ENCODE measurements at regions of chr14 and their contacts with region 1.

Region 1: DNA sequence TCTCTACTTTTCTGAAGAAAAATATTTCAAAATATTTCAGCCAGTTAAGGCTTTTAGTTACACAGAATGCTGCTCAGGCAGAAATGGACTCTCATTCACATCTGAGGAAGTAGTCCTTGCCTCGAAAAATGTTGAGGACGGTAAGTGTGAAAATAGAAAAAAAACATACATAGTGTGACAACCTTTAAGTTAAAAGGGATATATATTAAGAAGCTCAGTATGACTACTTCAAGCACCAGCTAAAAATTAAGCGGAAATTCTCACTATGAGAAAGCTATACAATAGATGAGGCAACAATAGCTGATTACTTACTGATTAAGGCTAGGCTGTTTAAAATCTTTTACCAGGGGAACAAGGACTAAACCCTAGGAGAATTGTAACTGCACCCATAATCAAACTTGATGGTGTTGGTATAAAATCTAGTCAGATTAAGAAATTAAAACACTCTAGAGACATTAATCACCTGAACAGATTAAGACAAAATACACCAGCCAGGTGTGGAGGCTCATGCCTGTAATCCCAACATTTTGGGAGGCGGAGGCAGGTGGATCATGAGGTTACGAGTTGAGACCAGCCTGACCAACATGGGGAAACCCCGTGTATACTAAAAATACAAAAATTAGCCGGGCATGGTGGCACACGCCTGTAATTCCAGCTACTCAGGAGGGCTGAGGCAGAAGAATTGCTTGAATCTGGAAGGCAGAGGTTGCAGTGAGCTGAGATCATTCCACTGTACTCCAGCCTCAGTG is 53.9 kb downstream of the HNRNPC start:
- DNase-seq: no peak
- H3K4me3 Mint-ChIP-seq: no peak overlapping the region
- H3K27ac Mint-ChIP-seq: peak overlapping the region; percentile 86
- H3K4me1 Mint-ChIP-seq: peaks cover 74% of the 10 kb centered on the region
- H3K27me3 Mint-ChIP-seq: no peaks in the 10 kb centered on the region

Region 2: GRCh38 chr14:20568393-20568792 is 646.9 kb before region 1 on chr14:
- CTCF ChIA-PET with region 1: no interaction called
- POLR2A ChIA-PET with region 1: no interaction called
- intact Hi-C with region 1: no loop called
- DNase-seq: no peak
- H3K4me3 Mint-ChIP-seq: no peak overlapping the region
- H3K27ac Mint-ChIP-seq: no peak overlapping the region
- H3K4me1 Mint-ChIP-seq: peaks cover 13% of the 10 kb centered on the region
- H3K27me3 Mint-ChIP-seq: no peaks in the 10 kb centered on the region

Region 3: DNA sequence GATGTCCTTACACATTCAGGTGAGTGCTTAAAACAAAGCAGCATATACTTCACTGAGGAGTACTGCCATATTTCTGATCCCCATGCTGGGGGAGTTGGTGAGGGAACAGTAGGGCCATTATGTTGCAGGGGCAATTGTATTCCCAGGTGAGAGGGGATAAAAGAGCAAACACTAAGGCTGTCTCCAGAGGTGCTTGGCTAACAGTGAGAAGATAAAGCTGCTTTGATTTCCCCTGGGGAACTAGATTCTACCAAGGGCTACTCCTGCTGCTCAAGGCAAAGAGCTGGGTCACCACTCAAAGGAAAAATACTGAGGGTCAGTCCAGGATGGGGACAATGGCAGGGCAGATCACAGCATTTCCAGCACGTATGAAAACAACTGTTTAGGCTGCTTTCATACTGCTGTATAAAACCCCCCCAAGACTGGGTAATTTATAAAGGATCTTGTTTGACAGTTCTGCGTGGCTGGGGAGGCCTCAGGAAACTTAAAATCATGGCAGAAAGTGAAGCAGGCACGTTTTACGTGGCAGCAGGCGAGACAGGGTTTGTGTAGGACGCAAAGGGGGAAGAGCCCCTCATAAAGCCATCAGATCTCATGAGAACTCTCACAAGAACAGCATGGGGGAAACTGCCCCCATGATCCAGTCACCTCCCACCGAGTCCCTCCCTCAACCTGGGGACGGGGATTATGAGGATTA is 11.7 kb before region 1 on chr14:
- CTCF ChIA-PET with region 1: no interaction called
- POLR2A ChIA-PET with region 1: interaction called, 6 read pairs
- intact Hi-C with region 1: loop called (anchors 2 kb)
- DNase-seq: no peak
- H3K4me3 Mint-ChIP-seq: no peak overlapping the region
- H3K27ac Mint-ChIP-seq: peak overlapping the region; percentile 47
- H3K4me1 Mint-ChIP-seq: peaks cover 20% of the 10 kb centered on the region
- H3K27me3 Mint-ChIP-seq: no peaks in the 10 kb centered on the region

Region 4: DNA sequence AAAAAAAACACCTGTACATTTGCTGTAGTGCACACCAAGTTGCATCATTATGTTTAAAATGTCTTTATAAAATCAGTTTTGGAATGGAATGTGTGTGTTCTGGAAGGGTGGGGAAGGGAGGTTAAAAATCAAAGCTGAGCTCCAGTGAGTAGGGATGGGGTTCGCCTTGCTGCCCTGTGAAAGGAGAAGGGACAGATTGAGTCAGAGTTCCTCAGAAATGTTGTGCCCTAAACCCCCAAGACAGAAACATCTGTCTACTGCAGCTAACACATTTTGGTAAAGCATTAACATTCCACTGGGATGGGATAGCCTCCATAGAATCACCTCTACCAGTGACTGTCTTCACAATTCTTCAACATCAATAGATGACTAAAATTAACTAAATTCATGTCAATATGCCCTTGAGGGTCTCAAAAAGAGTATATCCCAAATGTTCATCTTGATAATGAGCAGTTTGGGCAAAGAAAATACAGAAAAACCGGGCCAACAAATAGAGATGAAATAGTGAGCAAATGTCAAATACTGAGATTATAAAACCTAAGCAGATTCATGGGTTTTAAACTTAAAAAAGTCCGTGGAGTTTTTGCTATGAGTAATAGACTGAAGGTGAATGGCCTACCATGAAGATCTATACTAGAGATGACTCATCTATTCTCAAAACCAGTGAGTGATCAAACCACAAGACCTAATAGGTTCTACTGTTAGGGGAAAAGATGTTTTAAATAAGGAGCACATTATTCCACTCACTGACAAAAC is 48.5 kb after region 1 on chr14:
- CTCF ChIA-PET with region 1: interaction called, 3 read pairs
- POLR2A ChIA-PET with region 1: interaction called, 14 read pairs
- intact Hi-C with region 1: loop called (anchors 1 kb)
- DNase-seq: no peak
- H3K4me3 Mint-ChIP-seq: peak overlapping the region; percentile 100
- H3K27ac Mint-ChIP-seq: peak overlapping the region; percentile 100
- H3K4me1 Mint-ChIP-seq: peaks cover 67% of the 10 kb centered on the region
- H3K27me3 Mint-ChIP-seq: no peaks in the 10 kb centered on the region

Measured in activated CD4-positive, alpha-beta memory T cell treated with anti-CD3 and anti-CD28 coated beads for 36 hours (primary cell).